GM12878 (cell line): ENCODE measurements at regions of chr1 and their contacts with region 1.

Region 1: GRCh38 chr1:27416387-27417111 is 24.1 kb downstream of the GPR3 start:
- DNase-seq: peak; percentile 70
- ATAC-seq: peak; percentile 73
- H3K4me3 ChIP-seq: no peak overlapping the region
- H3K27ac ChIP-seq: peak overlapping the region; percentile 74
- H3K4me1 ChIP-seq: peaks cover 36% of the 10 kb centered on the region
- H3K27me3 ChIP-seq: no peaks in the 10 kb centered on the region
- CTCF ChIP-seq: peak; percentile 74 to 82 (median 74)
- EP300 ChIP-seq: 0 out of 4 replicates have a peak, but pooled peaks of 1 of the 2 experiments have one; percentile 26
- POLR2A ChIP-seq: no peak
- RAD21 ChIP-seq: peak; percentile 87

Region 2: GRCh38 chr1:26999440-26999987 is 417.0 kb before region 1 on chr1:
- CTCF ChIA-PET with region 1: no interaction called
- POLR2A ChIA-PET with region 1: no interaction called
- RAD21 ChIA-PET with region 1: no interaction called
- SMC1A ChIA-PET with region 1: no interaction called
- in situ Hi-C with region 1: no loop called
- intact Hi-C with region 1: no loop called
- DNase-seq: no peak
- ATAC-seq: no peak
- H3K4me3 ChIP-seq: no peak overlapping the region
- H3K27ac ChIP-seq: no peak overlapping the region
- H3K4me1 ChIP-seq: peaks cover 3% of the 10 kb centered on the region
- H3K27me3 ChIP-seq: peaks cover under 1 to 8% of the 10 kb centered on the region in 2 experiments
- CTCF ChIP-seq: no peak
- EP300 ChIP-seq: no peak
- POLR2A ChIP-seq: no peak
- RAD21 ChIP-seq: no peak

Region 3: DNA sequence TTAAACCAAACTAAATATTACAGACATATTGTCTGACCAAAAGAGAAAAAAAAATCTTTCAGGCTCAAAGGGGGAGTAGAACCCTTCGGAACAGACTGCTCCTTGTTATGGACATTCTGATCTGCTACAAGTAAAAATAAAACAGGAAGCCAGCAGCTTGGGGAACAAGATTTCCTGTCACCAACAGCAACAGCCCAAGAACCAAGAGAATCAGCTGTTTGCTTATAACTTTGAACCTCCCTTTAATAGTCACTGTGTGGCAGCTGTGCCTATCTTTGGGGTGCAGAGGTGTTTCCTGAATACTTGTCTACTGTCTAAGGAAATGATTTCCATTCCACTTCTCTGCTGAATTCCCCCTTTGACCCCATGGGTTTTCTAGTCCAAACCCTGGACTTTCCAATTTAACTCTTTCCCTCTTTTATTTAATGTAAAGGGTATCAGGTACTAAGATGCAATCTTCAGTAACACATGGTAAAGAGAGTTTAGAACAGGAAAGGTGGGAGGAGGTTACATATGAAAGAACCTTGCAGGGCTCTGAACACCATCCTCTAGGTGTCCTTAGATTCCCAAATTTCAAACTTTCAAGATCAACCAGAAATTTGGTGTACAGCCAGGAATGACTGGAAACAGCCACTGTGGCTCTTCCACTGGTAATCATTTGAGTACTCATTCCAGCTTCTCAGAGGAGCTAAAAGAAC is 14.5 kb after region 1 on chr1:
- CTCF ChIA-PET with region 1: interaction called, 240 read pairs
- POLR2A ChIA-PET with region 1: interaction called, 78 read pairs
- RAD21 ChIA-PET with region 1: interaction called, 126 read pairs
- SMC1A ChIA-PET with region 1: interaction called, 470 read pairs
- in situ Hi-C with region 1: no loop called
- intact Hi-C with region 1: no loop called
- DNase-seq: no peak
- ATAC-seq: peak; percentile 63
- H3K4me3 ChIP-seq: peak overlapping the region; percentile 12; the same call in 1 of the 2 replicates
- H3K27ac ChIP-seq: peak overlapping the region; percentile 59
- H3K4me1 ChIP-seq: peaks cover 76% of the 10 kb centered on the region
- H3K27me3 ChIP-seq: no peaks in the 10 kb centered on the region
- CTCF ChIP-seq: 0 out of 6 replicates have a peak, but pooled peaks of 1 of the 3 experiments have one; percentile 1
- EP300 ChIP-seq: no peak
- POLR2A ChIP-seq: no peak
- RAD21 ChIP-seq: 0 out of 2 replicates have a peak, but pooled peaks have one; percentile 7

Region 4: DNA sequence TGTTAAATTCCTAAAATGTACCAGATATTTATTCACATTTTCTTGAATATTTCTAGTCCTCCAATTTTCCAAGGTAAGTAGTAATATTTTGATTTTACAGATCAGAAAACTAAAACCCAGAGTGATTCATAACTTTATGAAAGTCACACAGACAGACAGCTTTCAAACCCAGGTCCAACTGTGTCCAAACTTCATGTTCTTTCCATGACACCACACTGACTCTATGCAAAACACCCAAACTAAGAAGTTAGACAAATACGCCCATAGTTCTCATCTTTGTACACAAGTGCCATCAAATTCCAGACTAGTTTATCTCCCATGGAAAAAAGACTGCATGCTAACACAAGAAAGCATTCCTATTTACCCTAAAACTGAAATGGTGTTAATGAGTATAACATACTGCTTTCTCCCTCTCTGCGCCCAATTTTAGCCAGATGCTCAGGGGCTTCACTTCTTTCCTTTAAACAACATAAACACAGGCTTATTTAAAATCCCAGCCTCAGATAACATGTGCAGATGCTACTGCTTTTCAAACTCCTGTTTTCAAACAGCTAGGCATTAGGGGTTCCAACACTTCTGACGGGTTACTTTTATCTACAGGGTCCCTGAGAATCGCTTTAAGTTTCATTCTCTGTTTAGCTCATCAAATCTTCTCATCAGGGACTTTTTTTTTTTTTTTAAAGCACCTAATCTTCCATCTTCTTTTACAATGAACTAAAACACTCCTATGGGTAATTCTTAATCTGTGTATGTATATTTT is 28.8 kb after region 1 on chr1:
- CTCF ChIA-PET with region 1: interaction called, 240 read pairs
- POLR2A ChIA-PET with region 1: interaction called, 78 read pairs
- RAD21 ChIA-PET with region 1: interaction called, 126 read pairs
- SMC1A ChIA-PET with region 1: interaction called, 470 read pairs
- in situ Hi-C with region 1: no loop called
- intact Hi-C with region 1: loop called (anchors 1 kb)
- DNase-seq: no peak
- ATAC-seq: peak; percentile 80
- H3K4me3 ChIP-seq: peak overlapping the region; percentile 36; the same call in 1 of the 2 replicates
- H3K27ac ChIP-seq: peak overlapping the region; percentile 85
- H3K4me1 ChIP-seq: peaks cover 63% of the 10 kb centered on the region
- H3K27me3 ChIP-seq: no peaks in the 10 kb centered on the region
- CTCF ChIP-seq: no peak
- EP300 ChIP-seq: peak in 1 of 2 experiments; percentile 37; a peak in 2 of 4 replicates
- POLR2A ChIP-seq: no peak
- RAD21 ChIP-seq: 0 out of 2 replicates have a peak, but pooled peaks have one; percentile 3

Region 5: GRCh38 chr1:27481994-27482620 is 65.6 kb after region 1 on chr1:
- CTCF ChIA-PET with region 1: interaction called, 28 read pairs
- POLR2A ChIA-PET with region 1: interaction called, 5 read pairs
- RAD21 ChIA-PET with region 1: interaction called, 94 read pairs
- SMC1A ChIA-PET with region 1: interaction called, 19 read pairs
- in situ Hi-C with region 1: no loop called
- intact Hi-C with region 1: no loop called
- DNase-seq: no peak
- ATAC-seq: peak; percentile 64
- H3K4me3 ChIP-seq: peak overlapping the region; percentile 60
- H3K27ac ChIP-seq: peak overlapping the region; percentile 62
- H3K4me1 ChIP-seq: peaks cover 45% of the 10 kb centered on the region
- H3K27me3 ChIP-seq: no peaks in the 10 kb centered on the region
- CTCF ChIP-seq: no peak
- EP300 ChIP-seq: 0 out of 4 replicates have a peak, but pooled peaks of 1 of the 2 experiments have one; percentile 10
- POLR2A ChIP-seq: no peak
- RAD21 ChIP-seq: no peak

Region 6: GRCh38 chr1:27513958-27514357 is 97.4 kb after region 1 on chr1:
- CTCF ChIA-PET with region 1: interaction called, 3 read pairs
- POLR2A ChIA-PET with region 1: no interaction called
- RAD21 ChIA-PET with region 1: interaction called, 5 read pairs
- SMC1A ChIA-PET with region 1: interaction called, 16 read pairs
- in situ Hi-C with region 1: no loop called
- intact Hi-C with region 1: no loop called
- DNase-seq: no peak
- ATAC-seq: no peak
- H3K4me3 ChIP-seq: no peak overlapping the region
- H3K27ac ChIP-seq: no peak overlapping the region
- H3K4me1 ChIP-seq: no peaks in the 10 kb centered on the region; the same call in 1 of the 2 replicates
- H3K27me3 ChIP-seq: no peaks in the 10 kb centered on the region
- CTCF ChIP-seq: no peak
- EP300 ChIP-seq: no peak
- POLR2A ChIP-seq: no peak
- RAD21 ChIP-seq: no peak

Region 7: GRCh38 chr1:27556781-27557595 is 140.4 kb after region 1 on chr1:
- CTCF ChIA-PET with region 1: interaction called, 23 read pairs
- POLR2A ChIA-PET with region 1: no interaction called
- RAD21 ChIA-PET with region 1: interaction called, 25 read pairs
- SMC1A ChIA-PET with region 1: interaction called, 30 read pairs
- in situ Hi-C with region 1: no loop called
- intact Hi-C with region 1: no loop called
- DNase-seq: no peak
- ATAC-seq: peak; percentile 92
- H3K4me3 ChIP-seq: no peak overlapping the region
- H3K27ac ChIP-seq: no peak overlapping the region
- H3K4me1 ChIP-seq: peaks cover 16% of the 10 kb centered on the region
- H3K27me3 ChIP-seq: no peaks in the 10 kb centered on the region
- CTCF ChIP-seq: peak; percentile 85 to 96 (median 86)
- EP300 ChIP-seq: no peak
- POLR2A ChIP-seq: no peak
- RAD21 ChIP-seq: peak; percentile 85